AG04450 (cell line): ENCODE measurements at regions of chr14 and their contacts with region 1.

Region 1: GRCh38 chr14:99668307-99669295 is 15.5 kb upstream of the CYP46A1 start:
- DNase-seq: no peak
- H3K4me3 ChIP-seq: no peak overlapping the region
- H3K27ac ChIP-seq: no peak overlapping the region
- H3K27me3 ChIP-seq: peaks cover 8% of the 10 kb centered on the region
- CTCF ChIP-seq: no peak

Region 2: DNA sequence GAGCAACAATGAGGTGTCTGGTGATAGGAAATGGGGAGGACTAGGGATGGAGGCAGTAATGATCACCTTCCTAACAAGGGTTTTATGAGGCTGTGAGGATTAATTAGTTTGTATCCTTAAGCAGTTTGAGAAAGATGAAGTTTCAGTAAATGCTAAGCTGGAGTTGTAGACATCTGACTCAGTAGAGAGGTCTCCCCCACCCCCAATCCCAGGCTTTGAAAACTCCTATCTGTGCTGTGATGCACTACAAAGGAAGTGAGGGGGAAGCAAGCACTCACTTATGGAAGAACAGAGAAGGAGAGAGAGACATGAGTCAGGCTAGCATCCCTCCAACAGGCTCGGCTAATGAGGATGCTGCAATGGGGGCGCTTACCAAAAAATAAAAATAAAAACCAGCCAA is 391.1 kb before region 1 on chr14:
- CTCF ChIA-PET with region 1: no interaction called
- POLR2A ChIA-PET with region 1: no interaction called
- DNase-seq: no peak
- H3K4me3 ChIP-seq: no peak overlapping the region
- H3K27ac ChIP-seq: no peak overlapping the region
- H3K27me3 ChIP-seq: peaks cover 29% of the 10 kb centered on the region
- CTCF ChIP-seq: no peak

Region 3: DNA sequence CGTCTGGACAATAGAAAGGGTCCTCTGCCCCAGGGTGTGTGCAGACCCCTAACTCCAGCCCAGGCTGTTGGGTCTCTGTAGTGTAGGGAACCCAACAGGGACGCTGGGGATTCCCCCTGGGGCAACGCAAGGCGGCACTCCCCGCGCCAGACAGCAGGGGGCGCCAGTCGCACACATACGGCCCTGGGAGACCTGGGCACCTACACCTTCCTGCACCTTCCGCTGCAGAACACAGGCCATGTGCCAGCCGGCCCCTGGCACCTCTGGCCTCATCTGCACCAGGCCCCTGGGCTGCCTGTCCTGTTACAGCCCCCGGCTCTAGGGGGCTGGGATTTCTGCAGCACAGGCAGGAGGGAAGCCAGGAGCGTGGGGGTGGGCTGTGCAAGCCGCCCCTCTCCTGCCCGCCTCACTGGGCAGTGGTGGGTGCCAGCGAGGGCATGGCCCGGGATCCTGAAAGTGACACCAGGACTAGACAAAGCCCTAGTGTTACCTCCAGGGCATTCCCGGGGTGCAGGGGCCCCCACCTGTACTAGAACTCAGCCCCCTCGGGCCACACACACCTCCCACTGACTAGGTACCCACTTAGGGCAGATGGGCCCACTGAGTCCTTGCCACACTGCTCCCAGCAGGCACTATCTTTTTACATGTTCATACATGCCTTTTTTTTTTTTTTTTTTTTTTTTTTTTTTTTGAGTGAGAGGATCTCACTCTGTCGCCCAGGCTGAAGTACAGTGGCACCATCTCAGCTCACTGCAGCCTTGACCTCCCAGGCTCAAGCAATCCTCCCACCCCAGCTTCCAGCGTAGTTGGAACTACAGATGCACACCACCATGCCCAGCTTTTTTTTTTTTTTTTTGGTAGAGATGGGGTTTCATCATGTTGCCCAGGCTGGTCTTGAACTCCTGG is 149.9 kb before region 1 on chr14:
- CTCF ChIA-PET with region 1: interaction called, 10 read pairs
- POLR2A ChIA-PET with region 1: no interaction called
- DNase-seq: no peak
- H3K4me3 ChIP-seq: no peak overlapping the region
- H3K27ac ChIP-seq: no peak overlapping the region
- H3K27me3 ChIP-seq: no peaks in the 10 kb centered on the region
- CTCF ChIP-seq: peak; percentile 94

Region 4: GRCh38 chr14:99619835-99620834 is 48.5 kb before region 1 on chr14:
- CTCF ChIA-PET with region 1: no interaction called
- POLR2A ChIA-PET with region 1: no interaction called
- DNase-seq: no peak
- H3K4me3 ChIP-seq: no peak overlapping the region
- H3K27ac ChIP-seq: peak overlapping the region; percentile 31
- H3K27me3 ChIP-seq: no peaks in the 10 kb centered on the region
- CTCF ChIP-seq: no peak

Region 5: GRCh38 chr14:99698642-99699041 is 30.0 kb after region 1 on chr14:
- CTCF ChIA-PET with region 1: no interaction called
- POLR2A ChIA-PET with region 1: no interaction called
- DNase-seq: no peak
- H3K4me3 ChIP-seq: no peak overlapping the region
- H3K27ac ChIP-seq: no peak overlapping the region
- H3K27me3 ChIP-seq: peaks cover 16% of the 10 kb centered on the region
- CTCF ChIP-seq: no peak